Panc1 (cell line): ENCODE measurements at regions of chr3 and their contacts with region 1.

Region 1: DNA sequence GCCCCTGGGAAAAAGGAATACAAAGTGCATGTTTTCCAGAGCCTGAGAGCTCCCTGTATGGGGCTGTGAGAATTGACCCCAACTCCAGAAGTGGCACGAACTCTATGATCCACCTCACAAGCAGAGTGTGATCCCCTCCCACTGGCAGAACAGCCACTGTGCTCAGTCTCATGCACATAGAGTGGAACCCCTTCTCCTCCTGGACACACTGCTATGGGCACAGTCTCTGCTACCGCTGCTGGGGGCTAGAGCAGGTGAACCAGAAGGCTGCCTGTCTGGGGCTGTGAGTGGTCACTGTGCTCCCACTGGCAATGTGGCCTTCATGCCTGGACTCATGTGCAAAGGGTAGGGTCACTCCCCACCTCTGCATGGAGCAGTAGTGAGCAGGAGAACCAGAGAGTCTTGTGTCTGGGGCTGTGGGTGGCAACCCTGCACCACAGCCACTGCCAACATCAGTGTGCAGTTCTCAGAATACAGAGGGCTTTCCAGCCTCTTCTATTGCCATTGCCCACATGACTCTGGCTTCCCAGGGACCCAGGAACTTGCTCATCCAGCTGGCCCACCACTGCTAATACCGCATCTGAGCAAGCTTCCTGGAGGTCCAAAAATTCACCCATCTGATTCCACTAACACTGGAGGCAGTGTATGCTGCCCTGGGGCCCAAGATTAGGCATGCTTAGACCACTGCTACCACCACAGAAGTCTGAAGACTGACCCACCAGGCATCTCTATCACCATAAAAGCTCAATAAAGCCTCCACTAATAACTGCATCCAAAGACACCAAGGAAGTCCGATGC is 343.7 kb upstream of the SOX14 start:
- DNase-seq: no peak
- ATAC-seq: no peak
- H3K4me3 ChIP-seq: no peak overlapping the region
- H3K27ac ChIP-seq: no peak overlapping the region
- H3K4me1 ChIP-seq: no peaks in the 10 kb centered on the region
- H3K27me3 ChIP-seq: no peaks in the 10 kb centered on the region
- CTCF ChIP-seq: no peak

Region 2: DNA sequence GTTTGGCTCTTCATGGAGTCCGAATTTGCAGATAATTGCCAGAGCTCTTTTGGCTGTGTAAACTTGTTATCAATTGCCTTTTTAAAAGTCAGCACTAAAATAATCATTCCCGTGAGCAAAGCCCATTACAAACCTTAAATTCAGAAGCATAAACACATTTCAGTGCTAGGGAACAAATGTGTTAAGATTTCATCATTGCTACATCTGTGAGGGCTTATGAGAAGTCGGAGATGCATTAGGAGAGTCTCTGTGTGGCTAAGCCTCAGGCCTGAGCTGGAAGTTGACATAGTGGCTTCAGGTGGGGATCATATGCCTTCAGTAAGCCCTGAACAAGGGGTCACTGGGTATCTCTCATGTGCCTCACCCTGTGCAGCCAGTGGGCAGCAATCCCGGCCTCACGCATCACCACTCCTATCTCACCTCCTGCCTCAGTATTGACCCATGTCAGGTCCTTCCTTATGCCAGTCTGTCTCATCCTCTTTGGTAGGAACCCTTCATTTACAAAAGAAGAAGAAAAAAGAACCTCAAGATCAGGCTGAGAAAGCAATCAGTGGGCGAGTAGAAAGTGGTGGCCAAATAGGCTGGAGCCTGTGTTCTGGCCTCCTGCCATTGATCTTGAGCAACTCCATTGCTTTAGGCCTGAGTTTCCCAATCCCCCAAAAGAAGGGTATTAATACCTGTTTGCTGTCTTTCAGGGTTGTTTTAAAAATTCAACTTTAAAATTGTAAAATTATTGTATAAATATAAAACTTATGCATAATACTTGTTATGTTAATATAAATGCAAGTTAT is 229.1 kb before region 1 on chr3:
- CTCF ChIA-PET with region 1: no interaction called
- POLR2A ChIA-PET with region 1: no interaction called
- in situ Hi-C with region 1: no loop called
- intact Hi-C with region 1: no loop called
- DNase-seq: no peak
- ATAC-seq: no peak
- H3K4me3 ChIP-seq: no peak overlapping the region
- H3K27ac ChIP-seq: no peak overlapping the region
- H3K4me1 ChIP-seq: no peaks in the 10 kb centered on the region
- H3K27me3 ChIP-seq: no peaks in the 10 kb centered on the region
- CTCF ChIP-seq: no peak

Region 3: DNA sequence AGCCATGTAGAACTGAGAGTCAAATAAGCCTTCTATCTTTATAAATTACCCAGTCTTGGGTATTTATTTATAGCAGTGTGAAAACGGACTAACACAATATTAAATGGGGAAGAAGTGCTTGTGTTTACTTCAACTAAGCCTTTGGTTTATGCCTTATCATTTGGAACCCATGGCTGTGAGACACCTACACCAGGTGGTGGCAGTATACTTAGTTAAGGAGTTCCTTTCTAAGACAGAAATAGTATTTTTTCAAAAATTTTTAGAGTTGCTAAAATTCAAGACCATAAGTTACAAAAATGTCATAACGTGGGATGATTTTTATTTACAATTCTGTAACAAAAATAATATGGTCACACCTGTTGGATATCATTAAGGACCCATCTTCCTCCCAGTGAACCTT is 10.8 kb before region 1 on chr3:
- CTCF ChIA-PET with region 1: no interaction called
- POLR2A ChIA-PET with region 1: no interaction called
- in situ Hi-C with region 1: no loop called
- intact Hi-C with region 1: no loop called
- DNase-seq: no peak
- ATAC-seq: no peak
- H3K4me3 ChIP-seq: no peak overlapping the region
- H3K27ac ChIP-seq: no peak overlapping the region
- H3K4me1 ChIP-seq: no peaks in the 10 kb centered on the region
- H3K27me3 ChIP-seq: no peaks in the 10 kb centered on the region
- CTCF ChIP-seq: peak; percentile 10; the same call in 1 of the 2 replicates

Region 4: DNA sequence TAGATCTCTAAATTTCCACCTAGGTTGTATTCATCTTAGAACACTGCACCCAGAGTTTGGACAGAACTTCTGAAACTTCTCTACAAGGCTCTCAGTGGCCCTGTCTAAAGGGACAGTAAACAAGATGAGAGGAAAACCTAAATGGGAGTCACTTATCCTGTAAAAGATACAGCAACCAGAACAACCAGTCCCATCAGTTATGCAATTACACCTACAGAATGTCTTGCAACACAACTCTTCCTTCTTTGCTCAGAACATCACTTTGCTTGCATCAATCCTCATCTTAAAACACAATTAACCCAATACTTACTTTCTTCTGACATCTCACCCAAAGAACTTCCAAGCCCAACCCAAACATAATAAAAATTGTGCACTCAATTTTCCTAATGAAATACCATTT is 54.5 kb after region 1 on chr3:
- CTCF ChIA-PET with region 1: no interaction called
- POLR2A ChIA-PET with region 1: no interaction called
- in situ Hi-C with region 1: no loop called
- intact Hi-C with region 1: loop called (anchors 10 kb)
- DNase-seq: no peak
- ATAC-seq: no peak
- H3K4me3 ChIP-seq: no peak overlapping the region
- H3K27ac ChIP-seq: no peak overlapping the region
- H3K4me1 ChIP-seq: no peaks in the 10 kb centered on the region
- H3K27me3 ChIP-seq: no peaks in the 10 kb centered on the region
- CTCF ChIP-seq: no peak